ENCODE measurements at regions of chr3 and their contacts with region 1.

Region 1: GRCh38 chr3:52636673-52637072 is 49.0 kb downstream of the PBRM1 start:
- DNase-seq: peak; percentile 76
- H3K4me3 ChIP-seq: no peak overlapping the region
- H3K27ac ChIP-seq: no peak overlapping the region
- H3K4me1 ChIP-seq: peaks cover 6% of the 10 kb centered on the region
- H3K27me3 ChIP-seq: no peaks in the 10 kb centered on the region
- CTCF ChIP-seq: no peak

Region 2: GRCh38 chr3:52552089-52552488 is 84.6 kb before region 1 on chr3:
- CTCF ChIA-PET with region 1: no interaction called
- dilution Hi-C with region 1: loop called (anchors 5 kb)
- in situ Hi-C with region 1: no loop called
- intact Hi-C with region 1: no loop called
- DNase-seq: no peak
- H3K4me3 ChIP-seq: no peak overlapping the region
- H3K27ac ChIP-seq: no peak overlapping the region
- H3K4me1 ChIP-seq: no peaks in the 10 kb centered on the region
- H3K27me3 ChIP-seq: no peaks in the 10 kb centered on the region
- CTCF ChIP-seq: no peak

Region 3: GRCh38 chr3:52679199-52679538 is 42.5 kb after region 1 on chr3:
- CTCF ChIA-PET with region 1: no interaction called
- dilution Hi-C with region 1: loop called (anchors 5 kb)
- in situ Hi-C with region 1: no loop called
- intact Hi-C with region 1: no loop called
- DNase-seq: no peak
- H3K4me3 ChIP-seq: no peak overlapping the region
- H3K27ac ChIP-seq: no peak overlapping the region
- H3K4me1 ChIP-seq: peaks cover 10% of the 10 kb centered on the region
- H3K27me3 ChIP-seq: no peaks in the 10 kb centered on the region
- CTCF ChIP-seq: no peak